KBM-7 (cell line): ENCODE measurements at regions of chr10 and their contacts with region 1.

Region 1: GRCh38 chr10:7410862-7411670 is at the start of gene SFMBT2:
- DNase-seq: peak; percentile 94

Region 2: DNA sequence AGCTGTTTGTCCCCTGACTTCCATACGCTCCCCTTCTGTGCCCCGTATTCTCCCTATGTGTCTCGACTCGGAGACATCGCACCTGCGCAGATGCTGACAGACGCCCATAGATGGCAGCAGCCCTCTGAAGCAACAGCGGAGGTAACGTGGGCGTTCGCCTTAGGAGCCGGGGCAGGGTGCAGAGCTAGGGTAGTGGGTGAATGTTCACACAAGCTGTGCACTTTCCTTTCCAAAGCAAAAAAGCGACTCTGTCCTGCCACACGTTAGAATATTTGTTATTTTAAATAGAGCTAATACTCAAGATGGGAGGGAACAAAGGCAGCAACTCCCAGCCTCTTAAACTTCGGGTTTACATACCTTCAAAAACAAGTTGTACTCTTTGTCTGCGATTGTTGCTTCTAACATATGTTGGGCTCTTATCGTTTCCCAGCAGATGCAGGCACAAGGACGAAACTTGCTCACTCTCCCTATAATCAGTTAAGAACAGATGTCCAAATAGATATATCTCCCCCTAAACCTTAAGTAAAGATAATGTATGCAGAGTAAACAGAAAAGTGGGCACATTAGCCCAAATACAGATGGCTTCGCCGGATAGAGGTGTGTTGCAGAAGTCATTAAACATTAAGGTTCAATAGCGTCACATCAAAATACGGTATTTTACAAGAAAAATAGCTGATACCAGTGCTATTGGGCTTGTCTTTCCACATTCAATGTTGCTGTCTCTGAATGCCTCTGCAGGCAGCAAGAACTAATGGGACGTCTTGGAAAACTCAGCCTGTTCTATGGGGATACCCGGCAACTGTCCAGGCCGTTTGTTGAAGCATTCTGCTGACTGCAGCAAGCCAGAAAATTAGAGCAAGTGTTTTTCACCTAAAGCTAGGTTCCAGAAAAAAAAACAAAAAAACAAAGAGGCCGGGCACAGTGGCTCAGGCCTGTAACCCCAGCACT is 490.7 kb before region 1 on chr10:
- in situ Hi-C with region 1: loop called (anchors 25 kb)
- DNase-seq: peak; percentile 75